Psoas muscle (tissue), 8 donors: ENCODE measurements at regions of chr10 and their contacts with region 1.

Region 1: DNA sequence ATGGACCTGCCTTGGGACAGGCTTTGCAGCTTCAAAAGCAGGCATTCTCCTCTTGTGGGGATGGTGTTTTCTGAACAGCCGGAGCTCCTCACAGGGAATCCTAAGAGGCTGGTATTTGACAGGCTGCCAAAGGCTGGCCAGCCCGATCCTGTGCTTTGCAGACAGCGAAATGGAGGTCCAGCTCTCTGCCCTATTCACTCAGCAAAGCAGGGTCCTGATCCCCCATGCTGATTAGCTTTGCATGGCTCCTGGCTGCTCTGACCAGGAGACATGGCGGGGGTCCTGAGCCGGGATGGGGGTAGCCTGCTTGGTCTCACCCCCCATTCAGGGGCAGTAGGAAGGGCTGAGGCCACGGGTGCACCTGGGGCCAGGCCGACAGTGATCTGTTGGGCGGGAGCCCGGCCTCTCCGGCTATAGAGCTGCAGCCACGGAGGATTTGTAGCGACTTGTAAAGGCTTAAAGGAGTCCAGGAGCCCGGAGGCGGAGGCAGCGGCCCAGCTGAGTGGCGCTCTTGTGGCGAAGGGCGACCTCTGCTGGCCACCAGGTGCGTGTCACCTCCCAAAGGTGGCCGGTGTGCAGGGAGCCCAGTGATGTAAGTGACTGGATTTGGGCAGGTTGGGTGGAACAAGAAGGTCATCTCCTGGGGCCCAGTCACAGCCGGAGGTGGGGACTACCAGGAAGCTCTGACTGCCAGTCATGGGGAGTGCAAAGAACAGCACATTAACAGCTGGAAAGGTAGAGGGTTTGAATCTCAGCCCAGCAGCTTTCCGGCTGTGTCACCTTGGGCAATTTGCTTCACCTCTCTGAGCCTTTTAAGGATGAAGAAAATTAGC is 126.5 kb downstream of the ZMIZ1 start:
- DNase-seq: peak; percentile 87 to 92
- ATAC-seq: peak; percentile 82 to 92 (median 88)
- H3K4me3 ChIP-seq: peak overlapping the region; percentile 22
- H3K27ac ChIP-seq: peak overlapping the region; percentile 53
- H3K4me1 ChIP-seq: peaks cover 28% of the 10 kb centered on the region
- H3K27me3 ChIP-seq: no peaks in the 10 kb centered on the region
- CTCF ChIP-seq: peak; percentile 98

Region 2: DNA sequence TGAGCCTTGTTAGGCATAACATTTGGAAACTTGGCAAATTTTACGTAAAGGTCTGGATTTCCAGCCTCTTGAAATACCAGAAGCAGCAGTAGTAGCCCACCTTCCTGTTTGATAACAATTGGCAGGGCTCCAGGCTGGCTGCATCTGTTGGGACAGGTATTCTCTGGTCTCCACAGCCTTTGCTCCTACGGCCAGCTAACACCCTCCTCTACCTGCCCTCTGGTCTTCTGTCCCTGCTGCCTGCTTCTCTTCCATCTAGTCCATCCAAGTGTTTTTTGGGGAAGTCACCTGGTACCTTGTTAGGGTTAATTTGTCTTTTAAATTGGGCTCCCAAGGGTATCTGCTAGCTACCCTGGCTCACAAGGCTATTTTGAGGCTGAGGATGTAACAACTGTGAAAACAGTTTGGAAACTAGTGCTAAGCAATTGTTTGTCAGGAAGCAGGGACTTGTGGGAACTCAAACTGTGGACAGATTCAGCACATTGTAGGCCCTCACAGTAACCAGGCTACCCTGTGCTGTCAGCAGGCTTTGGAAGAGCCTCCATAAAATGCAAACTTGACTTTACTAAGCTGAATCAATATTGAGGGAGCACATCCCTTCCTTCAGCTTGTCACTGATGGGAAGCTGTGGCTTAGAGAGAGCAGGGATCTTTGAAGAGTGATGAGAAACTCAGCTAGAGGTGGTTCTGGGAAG is 1153.1 kb before region 1 on chr10:
- intact Hi-C with region 1: loop called (anchors 2 to 5 kb)
- DNase-seq: no peak
- ATAC-seq: no peak
- H3K4me3 ChIP-seq: no peak overlapping the region
- H3K27ac ChIP-seq: no peak overlapping the region
- H3K4me1 ChIP-seq: peaks cover 33% of the 10 kb centered on the region
- H3K27me3 ChIP-seq: no peaks in the 10 kb centered on the region
- CTCF ChIP-seq: no peak

Region 3: GRCh38 chr10:78211561-78212051 is 983.7 kb before region 1 on chr10:
- intact Hi-C with region 1: loop called in 1 of 2 experiments (anchors 5 kb)
- DNase-seq: peak in 1 of 2 donors; percentile 23
- ATAC-seq: peak in 1 of 4 donors; percentile 39
- H3K4me3 ChIP-seq: no peak overlapping the region
- H3K27ac ChIP-seq: no peak overlapping the region
- H3K4me1 ChIP-seq: peaks cover 18% of the 10 kb centered on the region
- H3K27me3 ChIP-seq: no peaks in the 10 kb centered on the region
- CTCF ChIP-seq: peak; percentile 48

Region 4: GRCh38 chr10:78657163-78657861 is 538.0 kb before region 1 on chr10:
- intact Hi-C with region 1: loop called in 1 of 2 experiments (anchors 5 kb)
- DNase-seq: peak; percentile 76 to 87
- ATAC-seq: peak; percentile 89 to 97 (median 96)
- H3K4me3 ChIP-seq: no peak overlapping the region
- H3K27ac ChIP-seq: no peak overlapping the region
- H3K4me1 ChIP-seq: no peaks in the 10 kb centered on the region
- H3K27me3 ChIP-seq: peaks cover 0 to 11% (median 0%) of the 10 kb centered on the region in 3 donors
- CTCF ChIP-seq: peak; percentile 73

Region 5: DNA sequence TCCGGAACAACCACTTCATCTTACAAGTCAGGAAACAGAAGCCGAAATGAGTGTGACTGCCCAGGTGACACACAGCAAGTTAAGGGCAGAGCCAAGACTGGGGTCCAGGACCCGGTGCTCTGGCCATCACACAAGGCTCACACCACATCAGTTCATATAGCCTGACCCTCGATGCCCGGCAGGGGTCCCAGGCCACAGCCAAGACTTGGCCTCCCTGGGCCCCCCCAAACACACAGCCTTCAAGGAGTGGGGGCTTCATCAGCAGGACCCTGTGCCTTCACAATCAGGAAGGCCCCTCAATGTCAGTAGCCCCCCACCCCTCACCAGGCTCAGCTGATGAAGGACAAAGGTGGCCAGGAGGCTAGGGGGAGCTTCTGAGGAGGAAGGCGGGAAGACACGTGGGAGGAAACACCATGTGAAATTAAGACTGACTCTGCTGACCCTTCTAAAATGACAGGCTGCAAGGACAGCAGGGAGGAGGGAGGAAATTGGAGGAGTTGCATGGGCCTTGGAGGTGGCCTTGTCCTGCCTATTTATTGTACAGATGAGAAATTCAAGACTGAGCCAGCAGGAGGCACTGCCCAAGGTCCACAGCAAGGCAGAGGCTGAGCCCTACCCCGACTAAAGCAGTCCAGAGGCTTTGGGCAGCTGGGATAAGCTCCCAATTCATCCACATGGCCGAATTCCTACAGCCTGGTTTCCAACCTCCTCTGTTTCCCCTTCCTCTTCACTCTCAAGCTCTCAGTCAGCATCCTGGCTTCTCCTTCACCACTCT is 342.7 kb before region 1 on chr10:
- intact Hi-C with region 1: loop called in 1 of 2 experiments (anchors 2 kb)
- DNase-seq: no peak
- ATAC-seq: no peak
- H3K4me3 ChIP-seq: no peak overlapping the region
- H3K27ac ChIP-seq: no peak overlapping the region
- H3K4me1 ChIP-seq: peaks cover 10% of the 10 kb centered on the region
- H3K27me3 ChIP-seq: no peaks in the 10 kb centered on the region
- CTCF ChIP-seq: no peak

Region 6: GRCh38 chr10:78960316-78960800 is 234.9 kb before region 1 on chr10:
- intact Hi-C with region 1: loop called (anchors 10 kb)
- DNase-seq: peak; percentile 63 to 78
- ATAC-seq: peak in 3 of 4 donors; percentile 31 to 43 (median 35)
- H3K4me3 ChIP-seq: no peak overlapping the region
- H3K27ac ChIP-seq: no peak overlapping the region
- H3K4me1 ChIP-seq: peaks cover 17% of the 10 kb centered on the region
- H3K27me3 ChIP-seq: no peaks in the 10 kb centered on the region
- CTCF ChIP-seq: no peak

Region 7: GRCh38 chr10:78991187-78991586 is 204.1 kb before region 1 on chr10:
- intact Hi-C with region 1: no loop called
- DNase-seq: no peak
- ATAC-seq: no peak
- H3K4me3 ChIP-seq: no peak overlapping the region
- H3K27ac ChIP-seq: no peak overlapping the region
- H3K4me1 ChIP-seq: peaks cover 12% of the 10 kb centered on the region
- H3K27me3 ChIP-seq: no peaks in the 10 kb centered on the region
- CTCF ChIP-seq: no peak